ENCODE measurements at regions of chr12 and their contacts with region 1.

Region 1: DNA sequence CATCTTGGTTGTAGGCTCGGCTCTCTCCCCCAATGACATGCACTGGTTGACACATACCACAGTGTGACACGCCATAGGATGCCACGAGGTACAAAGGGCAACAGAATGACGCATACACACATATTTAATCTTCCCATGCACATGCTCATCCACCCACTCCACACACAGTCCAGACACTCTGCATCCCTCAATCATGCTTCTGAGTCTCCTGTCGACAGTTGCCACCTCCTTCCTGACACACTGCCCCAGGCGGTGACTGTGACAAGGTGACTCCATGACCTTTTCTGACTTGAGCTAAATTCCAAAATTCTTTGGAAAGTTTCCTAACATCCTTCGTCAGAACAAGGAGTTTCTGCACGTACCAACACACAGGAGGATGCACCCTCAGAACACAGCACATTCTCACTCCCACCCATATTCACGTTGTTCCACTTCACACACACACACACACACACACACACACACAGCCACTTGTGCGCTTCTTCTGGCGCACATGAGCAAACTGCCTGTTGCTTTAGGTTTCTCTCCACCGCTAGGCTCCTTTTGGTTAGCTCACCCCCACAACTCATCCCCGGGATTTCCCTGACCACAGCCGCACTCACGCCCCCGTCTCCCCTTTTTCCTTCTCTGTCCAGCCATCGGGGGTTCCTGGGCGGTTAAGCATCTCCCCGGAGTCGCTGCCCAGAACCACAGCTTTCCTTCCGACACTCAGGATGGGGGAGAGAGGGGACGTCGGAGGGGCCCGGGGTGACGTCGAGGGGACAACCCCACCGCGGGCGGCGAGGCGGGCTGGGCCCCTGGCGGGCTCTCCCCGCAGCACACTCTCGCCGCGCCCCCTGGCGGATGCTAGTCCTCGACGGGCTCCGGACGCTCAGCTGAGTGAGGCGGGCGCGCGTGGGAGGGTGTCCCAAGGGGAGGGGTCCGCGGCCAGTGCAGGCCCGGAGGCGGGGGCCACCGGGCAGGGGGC is 524 bp upstream of the WNT1 start:
- DNase-seq: peak; percentile 79
- ATAC-seq: peak; percentile 72
- H3K4me3 Mint-ChIP-seq: peak overlapping the region; percentile 68
- H3K27ac Mint-ChIP-seq: peak overlapping the region; percentile 64
- H3K4me1 Mint-ChIP-seq: peaks cover 42% of the 10 kb centered on the region
- H3K27me3 Mint-ChIP-seq: peaks cover 50% of the 10 kb centered on the region
- CTCF ChIP-seq: peak; percentile 45

Region 2: DNA sequence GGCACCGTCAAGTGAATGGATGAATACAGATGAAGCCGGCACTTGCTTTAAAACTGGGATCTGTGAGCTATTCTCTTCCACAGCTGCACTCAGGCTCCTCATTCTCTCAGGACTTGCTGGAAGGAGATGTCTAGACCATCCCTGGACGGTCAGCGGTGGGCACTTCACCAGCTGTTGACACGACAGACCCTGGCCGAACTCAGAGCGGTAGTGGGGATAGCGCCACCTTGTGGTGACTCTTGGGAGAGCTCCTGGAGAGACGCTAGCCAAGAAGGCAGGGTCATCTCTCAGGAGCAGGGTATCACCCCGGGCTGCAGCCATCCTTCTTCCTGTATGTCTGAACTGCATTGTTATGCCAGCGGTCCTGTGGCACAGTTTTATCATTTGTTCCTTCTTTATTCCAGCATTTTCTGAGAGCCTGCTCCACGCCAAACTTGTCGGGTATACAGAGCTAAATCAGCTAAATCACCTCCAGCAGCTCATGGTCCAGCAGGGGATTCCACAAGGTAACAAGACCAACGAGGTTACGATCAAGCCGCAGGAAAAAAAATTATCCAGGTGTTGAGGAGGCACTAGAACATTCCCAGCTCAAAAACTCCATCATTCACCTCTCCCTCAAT is 10.5 kb after region 1 on chr12:
- CTCF ChIA-PET with region 1: interaction called, 13 read pairs
- POLR2A ChIA-PET with region 1: interaction called, 6 read pairs
- intact Hi-C with region 1: no loop called
- DNase-seq: peak; percentile 58
- ATAC-seq: peak; percentile 90
- H3K4me3 Mint-ChIP-seq: no peak overlapping the region
- H3K27ac Mint-ChIP-seq: no peak overlapping the region
- H3K4me1 Mint-ChIP-seq: no peaks in the 10 kb centered on the region
- H3K27me3 Mint-ChIP-seq: peaks cover 34% of the 10 kb centered on the region
- CTCF ChIP-seq: peak; percentile 31

Region 3: GRCh38 chr12:49018261-49019119 is 40.9 kb after region 1 on chr12 and contains the start of gene PRKAG1:
- CTCF ChIA-PET with region 1: no interaction called
- POLR2A ChIA-PET with region 1: interaction called, 5 read pairs
- intact Hi-C with region 1: loop called (anchors 5 kb)
- DNase-seq: peak; percentile 97
- ATAC-seq: peak; percentile 86
- H3K4me3 Mint-ChIP-seq: peak within 1 kb of the TSS; percentile 93
- H3K27ac Mint-ChIP-seq: peak within 1 kb of the TSS; percentile 98
- H3K4me1 Mint-ChIP-seq: peaks cover 31% of the 10 kb centered on the region
- H3K27me3 Mint-ChIP-seq: no peaks in the 10 kb centered on the region
- CTCF ChIP-seq: no peak
- total RNA-seq, gene PRKAG1: 55.3 and 70.5 TPM in 2 replicates

Region 4: GRCh38 chr12:49146406-49146805 is 168.8 kb after region 1 on chr12:
- CTCF ChIA-PET with region 1: no interaction called
- POLR2A ChIA-PET with region 1: no interaction called
- intact Hi-C with region 1: no loop called
- DNase-seq: no peak
- ATAC-seq: no peak
- H3K4me3 Mint-ChIP-seq: no peak overlapping the region
- H3K27ac Mint-ChIP-seq: no peak overlapping the region
- H3K4me1 Mint-ChIP-seq: peaks cover 4% of the 10 kb centered on the region
- H3K27me3 Mint-ChIP-seq: no peaks in the 10 kb centered on the region
- CTCF ChIP-seq: no peak

Measured in activated B cell treated with CpG ODN at 0.5 μM for 24 hours (primary cell).